HEK293T (cell line): ENCODE measurements at regions of chr1 and their contacts with region 1.

Region 1: DNA sequence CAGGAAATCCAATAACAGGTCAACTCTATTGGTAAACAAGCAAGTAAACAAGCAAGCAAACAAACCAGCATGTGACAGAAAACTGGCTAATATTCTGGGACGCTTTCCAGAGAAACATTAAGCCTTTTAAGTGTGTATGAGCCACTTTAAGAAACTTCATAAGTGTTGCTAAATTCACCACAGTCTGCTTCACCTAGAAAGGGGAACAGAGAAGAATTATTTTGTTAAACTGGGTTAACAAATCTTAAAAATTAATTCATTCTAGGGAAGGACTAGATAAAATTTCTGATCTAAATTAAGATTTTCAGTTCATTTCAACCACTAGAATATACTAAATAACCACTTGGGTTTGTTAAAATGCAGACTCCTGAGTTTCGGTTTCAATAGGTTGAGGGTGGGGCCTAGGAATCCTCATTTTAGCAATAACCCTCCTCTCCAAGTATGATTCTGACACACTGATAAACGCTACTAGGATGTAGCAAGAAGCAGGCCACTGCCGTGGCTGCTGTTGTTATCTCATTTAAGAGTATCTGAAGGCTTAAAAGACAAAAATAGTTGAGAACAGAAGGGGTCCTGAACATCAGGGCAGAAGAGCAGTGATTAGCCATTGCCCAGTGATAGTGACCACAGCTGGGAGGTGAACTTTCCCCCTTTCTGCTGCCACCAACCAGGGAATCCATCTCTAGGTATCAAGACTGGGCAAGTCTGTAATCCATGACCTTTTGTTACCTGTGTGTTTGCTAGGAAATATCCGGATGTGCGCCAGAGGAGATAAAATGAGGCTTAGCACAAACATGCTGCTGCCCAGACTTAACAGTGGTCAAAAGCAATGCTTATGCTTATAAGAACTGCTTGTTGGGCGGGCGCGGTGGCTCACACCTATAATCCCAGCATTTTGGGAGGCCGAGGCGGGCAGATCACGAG is 11.2 kb downstream of the CREG1 start:
- DNase-seq: no peak

Region 2: GRCh38 chr1:167529829-167530474 is 12.4 kb before region 1 on chr1:
- CTCF ChIA-PET with region 1: interaction called, 12 read pairs
- POLR2A ChIA-PET with region 1: no interaction called
- DNase-seq: no peak

Region 3: GRCh38 chr1:167563579-167564246 is 21.3 kb after region 1 on chr1:
- CTCF ChIA-PET with region 1: no interaction called
- POLR2A ChIA-PET with region 1: no interaction called
- DNase-seq: no peak